ENCODE measurements at regions of chr4 and their contacts with region 1.

Region 1: DNA sequence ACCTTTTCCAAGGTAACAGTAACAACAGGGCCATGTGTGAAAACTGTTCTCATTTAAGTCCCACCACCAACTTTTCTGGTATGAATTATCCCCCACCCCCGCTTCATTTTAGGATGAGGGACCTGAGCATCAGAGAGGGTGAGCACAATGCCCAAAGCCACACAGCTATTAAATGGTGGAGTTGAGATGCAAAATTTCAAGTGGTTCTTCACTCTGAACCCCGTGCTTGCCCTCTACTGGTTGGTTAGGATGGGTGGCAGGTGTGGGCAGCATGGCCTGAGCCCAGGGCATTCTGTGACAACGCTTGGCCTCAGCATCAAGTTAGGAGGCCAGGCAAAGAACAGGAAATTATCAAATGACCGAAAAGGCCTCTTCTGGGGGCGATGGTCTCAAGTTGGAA is 33.5 kb downstream of the MED28 start:
- DNase-seq: no peak
- H3K4me3 ChIP-seq: no peak overlapping the region
- H3K27ac ChIP-seq: no peak overlapping the region
- H3K27me3 ChIP-seq: no peaks in the 10 kb centered on the region
- CTCF ChIP-seq: peak; percentile 19; the same call in 1 of the 2 replicates

Region 2: DNA sequence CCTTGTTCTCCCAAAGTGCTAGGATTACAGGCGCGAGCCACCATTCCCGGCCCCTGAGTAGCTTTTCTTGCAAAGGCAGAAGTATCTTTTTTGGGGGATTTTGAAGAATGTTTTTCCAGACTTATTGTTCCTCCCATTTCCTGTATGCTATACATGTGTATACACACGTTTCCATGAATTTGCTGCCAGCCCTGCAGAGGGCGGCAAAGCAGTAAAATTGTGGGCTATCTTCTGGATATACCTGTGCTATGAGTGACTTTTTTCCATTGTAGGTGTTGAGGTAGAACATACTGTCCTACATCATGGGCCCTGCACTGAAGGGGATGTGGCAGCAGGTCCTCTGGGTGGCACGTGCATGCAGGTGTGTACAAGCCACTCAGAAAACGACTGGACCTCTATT is 50.4 kb before region 1 on chr4:
- CTCF ChIA-PET with region 1: interaction called, 11 read pairs
- POLR2A ChIA-PET with region 1: no interaction called
- DNase-seq: no peak
- H3K4me3 ChIP-seq: no peak overlapping the region
- H3K27ac ChIP-seq: no peak overlapping the region
- H3K27me3 ChIP-seq: no peaks in the 10 kb centered on the region
- CTCF ChIP-seq: peak; percentile 51

Region 3: GRCh38 chr4:17636696-17637622 is 11.0 kb before region 1 on chr4:
- CTCF ChIA-PET with region 1: interaction called, 11 read pairs
- POLR2A ChIA-PET with region 1: no interaction called
- DNase-seq: peak; percentile 37
- H3K4me3 ChIP-seq: no peak overlapping the region
- H3K27ac ChIP-seq: no peak overlapping the region
- H3K27me3 ChIP-seq: no peaks in the 10 kb centered on the region
- CTCF ChIP-seq: peak; percentile 88

Measured in AG04450 (cell line).